H1 (cell line): ENCODE measurements at regions of chr6 and their contacts with region 1.

Region 1: DNA sequence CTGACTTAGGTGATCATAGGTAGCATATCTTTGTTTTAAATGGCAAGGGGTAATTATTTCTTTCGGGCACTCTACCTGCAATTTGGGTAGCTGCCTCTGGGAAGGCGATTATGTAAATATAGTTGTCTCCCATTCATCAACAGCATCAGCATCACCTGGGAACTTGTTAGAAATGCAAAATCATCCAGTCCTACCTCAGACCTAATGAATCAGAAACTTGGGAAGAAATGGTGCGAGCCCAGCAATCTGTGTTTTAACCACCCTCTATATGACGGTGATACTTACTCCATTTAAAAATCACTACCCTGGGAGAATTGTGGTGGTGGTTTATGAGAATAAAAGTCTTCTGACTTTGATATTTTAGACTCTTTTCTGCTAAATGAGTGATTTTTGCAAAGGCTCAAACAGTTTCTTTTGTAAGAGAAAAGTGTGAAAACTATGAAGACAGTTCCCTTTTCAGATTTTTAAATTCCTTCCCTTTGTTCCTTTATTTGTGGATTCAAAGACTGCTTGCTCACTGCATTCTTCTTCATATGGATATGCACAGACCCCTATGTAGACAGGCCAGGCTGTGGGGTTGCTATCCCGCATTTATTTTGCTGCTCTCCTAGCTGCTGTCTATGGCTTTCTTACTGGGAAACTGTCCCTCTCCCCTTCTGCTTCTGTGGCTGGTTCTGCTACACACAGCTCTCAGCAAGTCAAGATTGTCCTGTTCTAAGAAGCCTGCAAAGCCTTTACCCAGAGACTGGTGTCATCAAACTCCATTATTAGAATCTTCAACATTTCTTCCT is 365.3 kb downstream of the RNF144B start:
- DNase-seq: no peak
- H3K4me3 ChIP-seq: peak overlapping the region in 1 of 4 experiments; percentile 27; a peak in 1 of 8 replicates
- H3K27ac ChIP-seq: no peak overlapping the region
- H3K4me1 ChIP-seq: peaks cover 0 to 16% (median 8%) of the 10 kb centered on the region in 4 experiments; a peak in 3 of 7 replicates
- H3K27me3 ChIP-seq: no peaks in the 10 kb centered on the region
- CTCF ChIP-seq: no peak
- EP300 ChIP-seq: no peak
- POLR2A ChIP-seq: no peak
- RAD21 ChIP-seq: no peak

Region 2: GRCh38 chr6:18742406-18742805 is 10.1 kb before region 1 on chr6:
- CTCF ChIA-PET with region 1: interaction called, 14 read pairs
- POLR2A ChIA-PET with region 1: no interaction called
- DNase-seq: no peak
- H3K4me3 ChIP-seq: no peak overlapping the region
- H3K27ac ChIP-seq: no peak overlapping the region
- H3K4me1 ChIP-seq: no peaks in the 10 kb centered on the region
- H3K27me3 ChIP-seq: no peaks in the 10 kb centered on the region
- CTCF ChIP-seq: no peak
- EP300 ChIP-seq: no peak
- POLR2A ChIP-seq: no peak
- RAD21 ChIP-seq: no peak

Region 3: GRCh38 chr6:18823782-18824386 is 71.4 kb after region 1 on chr6:
- CTCF ChIA-PET with region 1: interaction called, 25 read pairs
- POLR2A ChIA-PET with region 1: no interaction called
- DNase-seq: peak; percentile 58 to 90
- H3K4me3 ChIP-seq: no peak overlapping the region
- H3K27ac ChIP-seq: no peak overlapping the region
- H3K4me1 ChIP-seq: peaks cover 0 to 5% (median 1%) of the 10 kb centered on the region in 4 experiments; a peak in 2 of 7 replicates
- H3K27me3 ChIP-seq: no peaks in the 10 kb centered on the region
- CTCF ChIP-seq: peak; percentile 65 to 81 (median 76)
- EP300 ChIP-seq: no peak
- POLR2A ChIP-seq: no peak
- RAD21 ChIP-seq: peak; percentile 75 to 78